Naive thymus-derived CD8-positive, alpha-beta T cell (primary cell): ENCODE measurements at regions of chr10 and their contacts with region 1.

Region 1: DNA sequence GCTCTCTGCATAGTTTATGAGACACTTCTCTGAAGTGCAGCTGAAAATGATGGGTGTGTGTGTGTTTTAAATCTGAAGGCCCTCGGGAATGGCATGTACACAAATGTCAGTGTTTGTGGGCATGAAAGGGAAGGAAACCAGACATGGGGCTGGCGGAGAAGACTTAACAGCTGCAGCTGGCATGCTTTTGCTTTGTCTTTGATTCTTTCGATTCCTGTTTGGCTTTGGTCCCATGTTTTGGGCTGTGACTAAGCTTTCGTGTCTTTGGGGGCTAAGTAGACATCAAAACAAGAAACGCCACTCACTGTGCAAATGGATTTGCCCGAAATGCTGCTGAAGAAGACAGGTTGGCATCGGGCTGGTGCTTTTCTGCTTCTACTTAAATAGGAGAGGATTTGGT is 179.3 kb downstream of the PFKFB3 start:
- DNase-seq: peak in 8 of 10 donors; percentile 5 to 79 (median 44)
- ATAC-seq: peak; percentile 85 to 92
- H3K4me3 Mint-ChIP-seq: peak overlapping the region in 9 of 10 donors; percentile 64 to 88 (median 80)
- H3K27ac Mint-ChIP-seq: peak overlapping the region in 8 of 10 donors; percentile 2 to 97 (median 70)
- H3K4me1 Mint-ChIP-seq: peaks cover 14 to 27% (median 22%) of the 10 kb centered on the region in 4 donors
- H3K27me3 Mint-ChIP-seq: no peaks in the 10 kb centered on the region

Region 2: DNA sequence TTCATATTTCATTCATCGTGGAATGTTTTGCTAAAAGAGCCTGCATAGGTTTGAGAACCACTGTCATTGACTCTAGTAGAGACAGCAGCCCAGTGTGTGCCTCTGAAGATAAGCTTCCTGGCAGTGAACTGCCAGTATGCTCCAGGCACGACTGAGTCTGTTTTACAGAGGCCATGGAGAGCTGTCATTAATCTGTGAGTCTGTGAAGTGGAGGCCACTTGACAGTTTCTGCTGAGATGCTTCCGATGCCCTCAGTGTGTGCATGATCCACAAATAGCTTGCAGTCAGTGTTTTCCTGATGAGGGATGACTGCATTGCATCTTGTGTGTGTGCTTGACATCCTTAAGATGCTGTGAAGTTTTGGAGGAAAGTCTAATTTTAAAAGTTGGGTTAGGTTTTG is 17.2 kb before region 1 on chr10:
- POLR2A ChIA-PET with region 1: interaction called, 10 read pairs
- DNase-seq: no peak
- ATAC-seq: no peak
- H3K4me3 Mint-ChIP-seq: no peak overlapping the region
- H3K27ac Mint-ChIP-seq: no peak overlapping the region
- H3K4me1 Mint-ChIP-seq: no peaks in the 10 kb centered on the region
- H3K27me3 Mint-ChIP-seq: peaks cover 0 to 1% (median 0%) of the 10 kb centered on the region in 5 donors